ENCODE measurements at regions of chr20 and their contacts with region 1.

Region 1: GRCh38 chr20:31803552-31804291 is 15.4 kb upstream of the MYLK2 start:
- DNase-seq: no peak
- H3K4me3 ChIP-seq: no peak overlapping the region
- H3K27ac ChIP-seq: no peak overlapping the region
- H3K4me1 ChIP-seq: no peaks in the 10 kb centered on the region
- CTCF ChIP-seq: no peak

Region 2: GRCh38 chr20:31764641-31765305 is 38.9 kb before region 1 on chr20:
- CTCF ChIA-PET with region 1: no interaction called
- POLR2A ChIA-PET with region 1: no interaction called
- intact Hi-C with region 1: loop called (anchors 5 kb)
- DNase-seq: no peak
- H3K4me3 ChIP-seq: no peak overlapping the region
- H3K27ac ChIP-seq: no peak overlapping the region
- H3K4me1 ChIP-seq: no peaks in the 10 kb centered on the region
- CTCF ChIP-seq: no peak